Activated B cell treated with CpG ODN at 0.5 μM for 24 hours (primary cell): ENCODE measurements at regions of chr2 and their contacts with region 1.

Region 1: DNA sequence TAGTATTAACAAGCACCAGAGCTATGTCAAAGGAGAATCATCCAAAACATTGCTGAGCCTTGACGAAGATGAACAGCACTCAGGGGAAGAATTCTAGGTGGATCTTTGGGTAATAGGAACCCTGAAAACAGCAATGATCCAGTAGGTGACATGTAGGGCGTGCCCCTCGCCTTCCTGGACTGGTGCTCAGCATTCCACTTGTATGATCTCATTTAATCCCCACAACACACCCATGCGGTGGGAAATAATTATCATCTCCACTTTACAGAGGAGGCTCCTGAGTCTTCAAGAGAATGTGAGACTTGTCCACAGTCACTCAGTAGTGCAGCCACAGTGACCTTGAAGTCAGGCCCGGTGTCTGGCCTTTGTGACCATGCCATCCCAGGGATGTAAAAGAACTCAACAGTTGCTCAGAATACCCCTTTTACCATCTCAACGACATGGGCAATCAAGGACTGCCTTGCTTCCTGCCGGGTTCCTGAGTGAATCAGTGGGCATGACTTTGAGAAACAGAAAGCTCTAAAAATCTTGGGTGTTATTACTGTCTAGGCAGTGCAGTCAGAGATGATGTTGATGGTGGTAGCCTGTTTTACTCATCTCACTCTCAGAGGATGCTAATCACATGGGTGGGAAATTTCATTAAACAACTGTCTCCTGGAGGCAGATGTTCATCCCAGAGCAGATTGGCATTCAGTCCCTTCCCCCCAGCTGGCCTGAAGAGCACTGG is 161.6 kb downstream of the BCL11A start:
- DNase-seq: no peak
- ATAC-seq: peak; percentile 53
- H3K4me3 Mint-ChIP-seq: peak overlapping the region; percentile 53
- H3K27ac Mint-ChIP-seq: peak overlapping the region; percentile 76
- H3K4me1 Mint-ChIP-seq: peaks cover 57% of the 10 kb centered on the region
- H3K27me3 Mint-ChIP-seq: no peaks in the 10 kb centered on the region
- CTCF ChIP-seq: no peak

Region 2: GRCh38 chr2:60371681-60372080 is 20.1 kb before region 1 on chr2:
- CTCF ChIA-PET with region 1: no interaction called
- POLR2A ChIA-PET with region 1: interaction called, 12 read pairs
- intact Hi-C with region 1: loop called (anchors 2 kb)
- DNase-seq: no peak
- ATAC-seq: no peak
- H3K4me3 Mint-ChIP-seq: peak overlapping the region; percentile 46
- H3K27ac Mint-ChIP-seq: peak overlapping the region; percentile 95
- H3K4me1 Mint-ChIP-seq: peaks cover 84% of the 10 kb centered on the region
- H3K27me3 Mint-ChIP-seq: no peaks in the 10 kb centered on the region
- CTCF ChIP-seq: no peak

Region 3: DNA sequence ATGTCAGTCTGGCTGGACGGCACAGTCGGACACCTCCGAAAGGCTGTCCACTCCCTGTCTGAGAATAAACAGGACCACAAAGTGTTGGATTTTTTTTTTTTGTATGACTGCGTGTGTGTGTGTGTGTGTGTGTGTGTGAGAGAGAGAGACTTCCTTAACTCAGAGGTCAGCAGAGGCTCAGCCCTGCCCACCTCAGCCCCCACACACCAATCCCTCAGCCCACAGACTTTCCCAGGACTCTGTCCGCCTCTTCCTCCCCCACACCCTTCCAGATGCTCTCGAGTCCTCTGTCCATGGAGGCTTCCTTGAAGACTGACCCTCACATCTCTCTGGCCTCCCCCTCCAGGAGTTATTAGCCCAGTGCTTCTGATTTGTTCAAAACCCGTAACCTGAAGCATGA is 14.4 kb after region 1 on chr2:
- CTCF ChIA-PET with region 1: no interaction called
- POLR2A ChIA-PET with region 1: interaction called, 6 read pairs
- intact Hi-C with region 1: loop called (anchors 2 kb)
- DNase-seq: no peak
- ATAC-seq: no peak
- H3K4me3 Mint-ChIP-seq: no peak overlapping the region
- H3K27ac Mint-ChIP-seq: peak overlapping the region; percentile 62
- H3K4me1 Mint-ChIP-seq: peaks cover 81% of the 10 kb centered on the region
- H3K27me3 Mint-ChIP-seq: no peaks in the 10 kb centered on the region
- CTCF ChIP-seq: no peak